IMR-90 (cell line): ENCODE measurements at regions of chr11 and their contacts with region 1.

Region 1: GRCh38 chr11:55661901-55662300 is at the start of gene OR4C6:
- DNase-seq: no peak
- ATAC-seq: no peak
- H3K4me3 ChIP-seq: no peak within 1 kb of the TSS
- H3K27ac ChIP-seq: no peak within 1 kb of the TSS
- H3K4me1 ChIP-seq: no peaks in the 10 kb centered on the region
- H3K27me3 ChIP-seq: no peaks in the 10 kb centered on the region
- CTCF ChIP-seq: no peak
- POLR2A ChIP-seq: no peak
- RAD21 ChIP-seq: no peak
- total RNA-seq, gene OR4C6: not detected in 2 replicates

Region 2: GRCh38 chr11:55481416-55481815 is 180.5 kb before region 1 on chr11:
- CTCF ChIA-PET with region 1: no interaction called
- POLR2A ChIA-PET with region 1: no interaction called
- dilution Hi-C with region 1: no loop called
- in situ Hi-C with region 1: no loop called
- intact Hi-C with region 1: no loop called
- DNase-seq: no peak
- ATAC-seq: no peak
- H3K4me3 ChIP-seq: no peak overlapping the region
- H3K27ac ChIP-seq: no peak overlapping the region
- H3K4me1 ChIP-seq: no peaks in the 10 kb centered on the region
- H3K27me3 ChIP-seq: no peaks in the 10 kb centered on the region
- CTCF ChIP-seq: no peak
- POLR2A ChIP-seq: no peak
- RAD21 ChIP-seq: no peak

Region 3: DNA sequence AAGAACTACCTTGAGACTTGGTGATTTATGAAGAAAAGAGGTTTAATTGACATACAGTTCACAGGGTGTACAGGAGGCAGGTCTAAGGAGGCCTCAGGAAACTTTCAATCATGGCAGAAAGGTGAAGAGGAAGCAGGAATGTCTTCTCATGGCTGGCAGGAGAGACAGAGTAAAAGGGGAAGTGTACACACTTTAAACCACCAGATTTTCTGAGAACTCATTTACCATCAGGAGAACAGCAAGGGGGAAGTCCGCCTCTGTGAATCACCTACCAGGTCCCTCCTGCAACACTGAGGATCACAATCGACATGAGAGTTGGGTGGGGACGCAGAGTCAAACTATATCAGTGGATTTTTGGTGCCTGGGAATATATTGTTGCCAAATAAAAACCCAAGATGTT is 71.0 kb after region 1 on chr11:
- CTCF ChIA-PET with region 1: no interaction called
- POLR2A ChIA-PET with region 1: no interaction called
- dilution Hi-C with region 1: no loop called
- in situ Hi-C with region 1: no loop called
- intact Hi-C with region 1: loop called (anchors 10 kb)
- DNase-seq: no peak
- ATAC-seq: no peak
- H3K4me3 ChIP-seq: no peak overlapping the region
- H3K27ac ChIP-seq: no peak overlapping the region
- H3K4me1 ChIP-seq: no peaks in the 10 kb centered on the region
- H3K27me3 ChIP-seq: no peaks in the 10 kb centered on the region
- CTCF ChIP-seq: no peak
- POLR2A ChIP-seq: no peak
- RAD21 ChIP-seq: no peak

Region 4: DNA sequence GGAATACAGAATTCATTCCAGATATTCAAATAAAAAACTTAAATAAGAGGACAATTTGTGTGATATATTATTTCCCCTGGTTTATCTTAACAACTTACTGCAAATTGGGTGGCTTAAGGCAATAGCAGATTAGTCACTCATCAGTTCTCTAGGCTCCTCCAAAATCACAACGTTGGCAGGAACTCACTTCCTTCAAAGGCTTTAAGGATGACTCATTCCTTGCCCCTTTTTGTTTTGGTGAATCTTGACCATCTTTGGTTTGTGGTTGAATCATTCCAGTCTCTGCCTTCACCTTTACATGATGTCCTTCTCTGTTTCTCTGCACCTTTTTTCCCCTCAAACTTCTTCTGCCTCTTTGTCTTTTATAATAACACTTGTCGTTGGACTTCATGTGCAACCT is 304.5 kb after region 1 on chr11:
- CTCF ChIA-PET with region 1: no interaction called
- POLR2A ChIA-PET with region 1: no interaction called
- dilution Hi-C with region 1: no loop called
- in situ Hi-C with region 1: no loop called
- intact Hi-C with region 1: no loop called
- DNase-seq: no peak
- ATAC-seq: no peak
- H3K4me3 ChIP-seq: no peak overlapping the region
- H3K27ac ChIP-seq: no peak overlapping the region
- H3K4me1 ChIP-seq: no peaks in the 10 kb centered on the region
- H3K27me3 ChIP-seq: no peaks in the 10 kb centered on the region
- CTCF ChIP-seq: no peak
- POLR2A ChIP-seq: no peak
- RAD21 ChIP-seq: no peak